AG04449 (cell line): ENCODE measurements at regions of chr19 and their contacts with region 1.

Region 1: DNA sequence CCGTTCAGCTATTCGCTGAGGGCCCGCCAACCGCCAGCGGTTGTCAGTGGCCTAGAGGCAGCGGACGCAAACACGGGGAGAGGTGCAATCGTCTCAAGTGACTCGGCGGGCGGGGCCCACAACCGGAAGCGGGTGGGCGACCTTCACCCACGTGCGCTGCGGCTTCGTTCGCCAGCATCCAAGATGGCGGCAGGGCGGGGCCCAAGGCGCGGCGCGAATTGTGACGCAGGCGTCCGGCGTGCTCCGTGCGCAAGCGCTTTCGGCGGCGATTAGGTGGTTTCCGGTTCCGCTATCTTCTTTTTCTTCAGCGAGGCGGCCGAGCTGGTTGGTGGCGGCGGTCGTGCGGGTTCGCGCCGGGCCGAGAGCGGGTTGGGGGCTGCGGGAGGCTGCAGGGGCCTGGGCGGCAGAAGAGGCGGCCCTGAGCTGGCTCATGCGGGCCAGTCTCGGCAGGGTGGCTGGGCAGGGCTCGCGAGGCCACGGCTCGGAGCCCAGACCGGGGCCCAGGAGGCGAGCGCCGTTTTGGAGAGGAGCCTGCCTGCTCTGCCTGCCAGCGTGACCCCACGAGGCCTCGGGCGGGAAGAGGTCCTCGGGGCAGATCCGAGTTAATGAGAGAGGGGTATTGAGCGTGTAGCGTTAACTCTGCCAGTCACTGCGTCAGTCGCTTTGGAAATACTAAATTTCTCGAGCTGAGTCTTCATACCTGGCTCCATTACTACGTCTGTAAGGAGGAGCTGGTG is at the start of gene UBA52:
- DNase-seq: peak; percentile 62
- H3K4me3 ChIP-seq: peak within 1 kb of the TSS; percentile 96
- CTCF ChIP-seq: no peak

Region 2: GRCh38 chr19:18542936-18543815 is 28.6 kb before region 1 on chr19 and contains the start of gene FKBP8:
- CTCF ChIA-PET with region 1: no interaction called
- POLR2A ChIA-PET with region 1: no interaction called
- DNase-seq: no peak
- H3K4me3 ChIP-seq: peak within 1 kb of the TSS; percentile 74
- CTCF ChIP-seq: no peak

Region 3: GRCh38 chr19:18557474-18558201 is 14.1 kb before region 1 on chr19 and contains the start of gene KXD1:
- CTCF ChIA-PET with region 1: no interaction called
- POLR2A ChIA-PET with region 1: interaction called, 17 read pairs
- DNase-seq: peak; percentile 92
- H3K4me3 ChIP-seq: peak within 1 kb of the TSS; percentile 91
- CTCF ChIP-seq: no peak